Activated CD4-positive, alpha-beta memory T cell treated with anti-CD3 and anti-CD28 coated beads, Interleukin-2, amount 10 ng/mL, durations not matched to agents 7 days and 5 days (primary cell): ENCODE measurements at regions of chr12 and their contacts with region 1.

Region 1: DNA sequence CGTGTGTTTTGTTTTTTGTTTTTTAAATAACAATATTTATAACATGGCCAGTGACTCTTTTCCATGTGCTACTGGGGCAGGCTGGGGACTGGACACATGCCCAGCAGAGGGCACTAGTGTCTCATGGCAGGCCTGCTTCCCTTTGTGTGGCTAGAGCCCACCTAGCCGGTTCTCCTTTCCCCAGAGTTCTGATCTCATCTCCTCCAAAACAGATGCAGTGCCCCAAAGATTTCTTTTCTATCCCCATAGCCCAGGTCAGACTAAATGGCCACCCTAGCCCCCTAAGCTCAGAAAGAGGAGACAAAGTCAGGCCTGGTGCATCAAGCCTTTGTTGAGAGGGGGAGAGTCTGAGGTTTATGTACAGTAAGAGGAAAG is 21.2 kb downstream of the PRPF40B start:
- DNase-seq: peak; percentile 83
- H3K4me3 Mint-ChIP-seq: no peak overlapping the region
- H3K27ac Mint-ChIP-seq: peak overlapping the region; percentile 67
- H3K4me1 Mint-ChIP-seq: peaks cover 24% of the 10 kb centered on the region
- H3K27me3 Mint-ChIP-seq: no peaks in the 10 kb centered on the region

Region 2: DNA sequence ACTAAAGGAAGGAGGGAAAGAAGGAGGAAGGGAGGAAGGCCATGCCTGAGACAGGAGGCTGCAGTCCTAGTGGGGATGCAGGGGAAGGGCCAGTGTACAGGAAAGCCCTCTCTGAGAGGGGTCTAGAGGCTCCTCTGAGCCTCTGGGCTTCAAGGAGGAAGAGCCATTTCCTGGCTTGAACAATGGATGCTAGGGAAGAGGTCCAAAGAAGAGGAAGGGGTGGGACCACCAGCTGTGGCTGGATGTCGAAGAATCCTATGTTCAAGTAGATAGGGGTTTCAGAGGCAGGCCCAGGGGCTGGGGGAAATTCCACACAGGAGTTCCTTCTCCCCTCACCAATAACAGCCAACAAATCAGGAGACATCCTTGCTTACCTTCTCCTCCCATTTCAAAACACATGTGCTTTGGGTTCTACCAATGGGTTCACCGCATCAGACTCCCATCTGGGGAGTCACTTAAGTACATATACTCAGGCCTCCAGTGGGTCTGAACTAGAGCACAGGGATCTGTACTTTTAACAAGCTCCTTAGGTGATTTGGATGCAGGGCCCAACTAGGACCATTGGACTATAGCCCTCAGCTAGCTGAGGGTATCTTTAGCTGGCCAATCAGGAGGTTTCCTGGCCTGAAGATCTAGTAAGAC is 11.1 kb after region 1 on chr12:
- CTCF ChIA-PET with region 1: interaction called, 11 read pairs
- POLR2A ChIA-PET with region 1: interaction called, 3 read pairs
- DNase-seq: no peak
- H3K4me3 Mint-ChIP-seq: no peak overlapping the region
- H3K27ac Mint-ChIP-seq: peak overlapping the region; percentile 54
- H3K4me1 Mint-ChIP-seq: peaks cover 8% of the 10 kb centered on the region
- H3K27me3 Mint-ChIP-seq: no peaks in the 10 kb centered on the region

Region 3: GRCh38 chr12:49662998-49663843 is 18.6 kb after region 1 on chr12:
- CTCF ChIA-PET with region 1: interaction called, 18 read pairs
- POLR2A ChIA-PET with region 1: interaction called, 6 read pairs
- DNase-seq: peak; percentile 82
- H3K4me3 Mint-ChIP-seq: peak overlapping the region; percentile 56
- H3K27ac Mint-ChIP-seq: peak overlapping the region; percentile 95
- H3K4me1 Mint-ChIP-seq: peaks cover 60% of the 10 kb centered on the region
- H3K27me3 Mint-ChIP-seq: no peaks in the 10 kb centered on the region

Region 4: DNA sequence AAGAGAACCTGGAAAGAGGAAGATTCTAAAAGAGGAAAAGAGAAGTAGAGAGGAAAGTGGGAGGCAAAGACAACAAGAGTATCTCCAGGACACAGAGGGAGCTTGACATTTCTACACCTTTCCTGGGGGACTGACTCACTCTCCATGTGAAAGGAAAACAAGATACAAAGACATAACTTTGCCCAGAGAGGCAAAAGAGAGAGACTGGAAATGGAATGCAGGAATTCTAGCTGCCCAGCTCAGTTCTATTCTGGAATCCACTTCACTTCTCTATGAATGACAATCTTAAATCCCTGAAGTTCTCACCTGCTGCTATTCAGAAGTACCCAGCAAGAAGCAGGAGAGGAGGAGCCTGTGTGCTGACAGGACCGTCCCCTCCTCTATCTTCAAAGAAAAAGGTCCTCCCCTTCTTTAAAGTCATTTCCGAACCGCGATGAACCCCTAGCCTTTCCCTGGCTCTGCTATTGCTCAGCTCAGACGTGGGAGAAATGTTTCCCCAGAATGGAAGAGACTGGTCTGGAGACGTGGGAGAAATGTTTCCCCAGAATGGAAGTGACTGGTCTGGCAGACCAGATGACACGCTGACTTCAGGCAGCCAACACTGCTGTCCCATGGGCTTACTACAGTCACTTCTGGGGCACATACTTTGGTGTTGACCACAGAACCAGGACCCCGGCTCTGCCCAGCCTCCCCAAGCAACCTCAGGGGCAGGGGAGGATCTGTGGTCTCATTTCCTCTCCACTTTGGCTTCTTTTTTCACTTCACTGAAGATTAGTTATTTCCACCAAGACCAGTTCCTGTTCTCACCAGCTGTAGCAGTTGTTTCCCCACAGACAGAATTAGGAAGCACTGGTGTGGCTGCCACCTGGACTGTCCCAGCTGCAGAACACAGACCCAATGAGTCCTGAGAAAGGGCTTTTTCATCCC is 54.3 kb after region 1 on chr12:
- CTCF ChIA-PET with region 1: interaction called, 372 read pairs
- POLR2A ChIA-PET with region 1: interaction called, 9 read pairs
- DNase-seq: peak; percentile 55
- H3K4me3 Mint-ChIP-seq: peak overlapping the region; percentile 57
- H3K27ac Mint-ChIP-seq: peak overlapping the region; percentile 77
- H3K4me1 Mint-ChIP-seq: peaks cover 44% of the 10 kb centered on the region
- H3K27me3 Mint-ChIP-seq: no peaks in the 10 kb centered on the region

Region 5: DNA sequence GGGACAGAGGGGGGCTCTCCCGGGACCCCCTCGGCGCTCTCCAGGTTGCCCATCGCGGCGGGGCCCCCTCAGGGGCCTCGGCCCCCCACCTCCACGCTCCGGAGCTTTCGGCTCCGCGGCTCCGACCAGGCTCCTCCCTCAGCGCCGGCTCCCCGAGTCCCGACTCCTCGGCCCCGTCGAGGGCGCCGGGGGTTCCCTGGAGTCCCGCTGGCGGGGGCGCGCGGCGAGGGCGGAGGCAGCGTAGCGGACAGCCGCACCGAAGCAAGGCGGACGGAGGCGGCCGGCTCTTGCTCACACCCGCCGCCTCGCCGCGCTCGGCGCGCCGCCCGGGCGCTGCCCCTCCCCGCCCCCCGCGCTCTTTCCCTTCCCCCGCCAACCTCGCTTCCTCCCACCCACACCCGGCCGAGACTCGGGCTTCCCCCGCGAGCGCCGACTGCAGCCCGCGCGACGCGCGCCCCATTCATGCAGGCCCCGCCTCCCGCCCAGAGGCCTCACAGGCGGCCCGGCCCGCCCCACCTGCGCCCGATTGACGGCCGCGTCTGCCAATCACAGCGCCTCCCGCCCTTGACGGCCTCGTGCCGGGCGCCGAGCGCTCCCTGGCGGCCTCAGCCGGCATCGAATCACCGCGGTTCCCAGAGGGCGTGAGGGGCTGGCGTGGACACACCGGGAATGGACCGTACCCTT is 62.7 kb after region 1 on chr12 and contains the start of gene FMNL3:
- CTCF ChIA-PET with region 1: interaction called, 372 read pairs
- POLR2A ChIA-PET with region 1: interaction called, 38 read pairs
- DNase-seq: peak; percentile 98
- H3K4me3 Mint-ChIP-seq: peak within 1 kb of the TSS; percentile 88
- H3K27ac Mint-ChIP-seq: peak within 1 kb of the TSS; percentile 65
- H3K4me1 Mint-ChIP-seq: peaks cover 41% of the 10 kb centered on the region
- H3K27me3 Mint-ChIP-seq: peaks cover 26% of the 10 kb centered on the region
- total RNA-seq, gene FMNL3: 34.7 to 34.9 TPM

Region 6: DNA sequence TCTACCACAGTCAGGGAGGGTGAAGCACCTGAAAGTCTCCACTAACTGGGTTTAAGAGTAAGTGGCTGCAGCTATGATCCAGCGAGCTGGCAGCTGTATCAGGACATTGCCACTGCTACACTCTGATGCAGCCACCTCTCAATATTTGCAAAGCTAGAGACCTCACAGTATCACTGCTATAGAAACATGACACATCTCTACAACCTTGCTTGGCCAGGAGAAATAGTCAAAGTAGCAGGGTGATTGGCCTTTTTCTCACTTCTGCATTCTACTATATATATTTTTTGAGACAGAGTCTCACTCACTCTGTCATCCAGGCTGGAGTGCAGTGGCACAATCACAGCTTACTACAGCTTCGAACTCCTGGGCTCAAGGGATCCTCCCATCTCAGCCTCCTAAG is 71.9 kb after region 1 on chr12:
- CTCF ChIA-PET with region 1: interaction called, 372 read pairs
- POLR2A ChIA-PET with region 1: interaction called, 38 read pairs
- DNase-seq: no peak
- H3K4me3 Mint-ChIP-seq: no peak overlapping the region
- H3K27ac Mint-ChIP-seq: no peak overlapping the region
- H3K4me1 Mint-ChIP-seq: no peaks in the 10 kb centered on the region
- H3K27me3 Mint-ChIP-seq: peaks cover 44% of the 10 kb centered on the region